ENCODE measurements at regions of chr13 and their contacts with region 1.

Region 1: GRCh38 chr13:31174018-31174417 is 12.3 kb upstream of the HSPH1 start:
- DNase-seq: peak; percentile 51
- H3K4me3 ChIP-seq: no peak overlapping the region
- H3K27ac ChIP-seq: no peak overlapping the region
- H3K27me3 ChIP-seq: no peaks in the 10 kb centered on the region
- CTCF ChIP-seq: peak; percentile 49; the same call in 1 of the 2 replicates

Region 2: DNA sequence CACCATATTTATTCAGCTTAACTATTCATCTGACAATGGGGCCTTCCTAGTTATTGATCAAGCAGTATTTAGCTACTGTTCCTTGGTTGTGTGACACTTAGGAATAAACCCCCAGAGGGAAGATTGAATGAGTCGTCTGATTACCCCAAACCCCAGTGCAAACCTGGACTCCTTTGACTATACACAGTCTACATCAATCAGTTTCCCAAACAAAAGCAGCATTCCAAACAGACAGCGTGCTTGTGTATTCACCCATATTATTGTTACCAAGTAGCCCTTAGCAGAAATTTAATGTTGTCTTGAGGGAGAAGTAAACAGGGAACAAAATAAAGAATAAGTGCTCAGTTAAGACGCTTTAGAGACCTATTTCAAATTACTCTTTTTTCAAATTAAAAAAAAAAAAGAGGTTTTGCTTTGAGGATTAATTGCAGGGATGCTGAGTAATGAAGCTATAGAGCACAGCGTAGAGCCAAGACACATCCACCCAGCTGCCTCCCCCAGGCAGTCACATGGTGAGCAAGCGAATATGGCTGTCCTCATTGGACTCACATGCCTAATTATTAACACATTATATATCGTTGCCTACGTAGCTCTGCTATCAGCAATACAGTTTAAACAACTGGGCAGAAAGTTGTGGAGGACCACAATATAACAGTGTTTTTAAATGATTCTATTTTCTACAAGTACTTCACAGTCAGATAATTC is 11.1 kb after region 1 on chr13:
- CTCF ChIA-PET with region 1: interaction called, 10 read pairs
- POLR2A ChIA-PET with region 1: no interaction called
- DNase-seq: no peak
- H3K4me3 ChIP-seq: no peak overlapping the region
- H3K27ac ChIP-seq: no peak overlapping the region
- H3K27me3 ChIP-seq: no peaks in the 10 kb centered on the region
- CTCF ChIP-seq: no peak

Region 3: GRCh38 chr13:31199849-31200636 is 26.0 kb after region 1 on chr13 and contains the start of gene B3GLCT:
- CTCF ChIA-PET with region 1: interaction called, 10 read pairs
- POLR2A ChIA-PET with region 1: no interaction called
- DNase-seq: peak; percentile 21
- H3K4me3 ChIP-seq: peak within 1 kb of the TSS; percentile 68
- H3K27ac ChIP-seq: peak within 1 kb of the TSS; percentile 39
- H3K27me3 ChIP-seq: peaks cover 3% of the 10 kb centered on the region
- CTCF ChIP-seq: peak; percentile 71
- polyA plus RNA-seq, gene B3GLCT: 2.3 TPM in 2 replicates